ENCODE measurements at regions of chr17 and their contacts with region 1.

Region 1: DNA sequence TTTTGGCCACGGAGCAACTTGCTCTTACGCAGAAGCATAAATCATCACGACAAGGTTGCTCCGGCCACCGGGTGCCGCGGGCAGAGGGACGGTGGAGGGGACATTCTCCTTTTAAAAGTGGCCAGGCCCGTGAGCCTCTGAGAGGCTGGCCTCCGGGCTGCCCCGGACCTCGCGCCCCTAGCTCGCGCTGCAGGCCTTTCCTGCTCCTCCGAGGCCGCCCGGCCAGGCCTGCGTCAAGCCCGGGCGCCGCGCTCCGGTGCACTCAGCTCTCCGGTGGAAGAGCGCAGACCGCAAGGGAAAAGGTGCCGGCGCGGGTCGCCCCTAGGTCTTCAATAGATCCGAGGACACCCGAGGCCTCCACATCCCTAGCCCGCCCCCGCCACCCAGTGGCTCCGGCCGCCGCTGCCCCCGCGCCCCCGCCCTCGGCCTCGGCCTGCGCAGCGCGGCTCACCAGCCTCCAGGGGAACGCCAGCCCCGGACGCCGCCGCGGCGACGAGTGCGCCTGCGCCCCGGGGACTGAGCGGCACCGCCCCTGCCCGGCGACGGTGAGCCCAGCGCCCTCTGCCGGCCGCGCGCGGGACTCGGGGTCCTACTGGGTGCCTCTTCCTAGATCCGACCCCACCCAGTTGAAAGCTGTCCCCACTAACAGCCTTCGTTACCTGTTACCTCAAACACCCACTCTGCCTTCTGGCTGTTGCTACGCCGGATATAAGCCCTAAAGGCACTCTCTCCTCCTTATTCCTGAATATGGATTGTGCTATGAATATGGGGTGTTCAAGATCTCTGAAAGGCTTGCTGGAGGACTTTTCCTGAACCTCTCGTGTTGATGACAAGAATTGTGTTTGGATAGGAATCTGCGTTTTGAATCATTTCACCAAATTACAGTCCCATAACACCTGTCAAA is at the start of gene LYRM9:
- DNase-seq: peak; percentile 92 to 98 (median 93)
- ATAC-seq: peak; percentile 92 to 100 (median 100)
- H3K4me3 ChIP-seq: peak within 1 kb of the TSS; percentile 47 to 92 (median 76)
- H3K27ac ChIP-seq: peak within 1 kb of the TSS; percentile 14 to 93 (median 88)
- H3K4me1 ChIP-seq: peaks cover 0 to 27% (median 10%) of the 10 kb centered on the region in 12 donors
- H3K27me3 ChIP-seq: no peaks in the 10 kb centered on the region
- CTCF ChIP-seq: peak; percentile 80 to 99 (median 96)
- POLR2A ChIP-seq: peak in 1 of 2 donors; percentile 50
- total RNA-seq, gene LYRM9: 3.9 to 25.2 (median 9.7) TPM

Region 2: DNA sequence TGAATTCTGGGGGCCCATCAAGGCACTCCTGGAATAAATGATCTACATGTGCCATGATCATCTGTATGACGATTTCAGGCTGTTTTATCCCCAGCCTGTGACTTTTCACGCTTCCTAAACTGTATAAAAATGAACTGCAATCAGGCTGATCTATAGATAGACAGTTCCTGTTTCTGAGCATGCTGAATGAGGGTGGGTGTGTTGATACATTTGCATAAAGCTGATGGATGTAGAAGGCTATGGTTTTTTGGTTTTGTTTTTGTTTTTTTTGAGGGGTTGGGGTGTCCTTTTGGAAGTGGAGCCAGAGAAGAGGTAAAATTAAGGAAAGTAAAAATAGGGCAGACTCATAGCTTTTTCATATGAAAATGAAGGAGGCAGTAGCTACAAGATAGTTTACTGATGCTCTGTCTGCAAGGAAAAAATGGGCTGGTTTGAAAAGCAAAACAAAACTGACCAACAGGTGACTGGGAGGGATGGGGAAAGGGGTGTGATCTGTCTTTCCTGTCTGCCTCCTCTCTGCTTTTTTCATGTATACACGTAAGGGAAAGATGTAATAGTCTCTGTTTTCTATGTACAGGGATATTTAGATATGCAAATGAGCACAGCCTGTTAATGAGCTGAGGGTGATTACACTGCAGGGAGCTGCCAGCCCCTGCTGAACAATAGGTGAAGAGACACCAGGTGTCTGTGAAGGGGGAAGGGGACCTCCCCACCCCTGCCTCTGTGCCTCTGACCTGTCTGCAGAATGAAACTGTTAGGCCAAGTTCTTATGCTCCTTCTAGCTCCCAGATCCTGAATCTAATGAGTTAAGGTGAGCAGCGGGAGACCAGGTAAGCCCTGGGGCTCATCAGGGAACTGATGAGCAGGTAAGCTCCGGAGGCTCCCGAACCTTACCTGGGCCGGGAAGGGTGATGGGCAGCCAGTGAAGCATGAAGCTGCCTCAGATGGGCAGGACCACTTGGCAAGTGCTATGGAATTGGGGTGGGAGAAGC is 46.7 kb after region 1 on chr17:
- intact Hi-C with region 1: no loop called
- DNase-seq: no peak
- ATAC-seq: no peak
- H3K4me3 ChIP-seq: no peak overlapping the region
- H3K27ac ChIP-seq: no peak overlapping the region
- H3K4me1 ChIP-seq: no peaks in the 10 kb centered on the region
- H3K27me3 ChIP-seq: peaks cover 0 to 2% (median 0%) of the 10 kb centered on the region in 9 donors
- CTCF ChIP-seq: no peak
- POLR2A ChIP-seq: no peak

Region 3: DNA sequence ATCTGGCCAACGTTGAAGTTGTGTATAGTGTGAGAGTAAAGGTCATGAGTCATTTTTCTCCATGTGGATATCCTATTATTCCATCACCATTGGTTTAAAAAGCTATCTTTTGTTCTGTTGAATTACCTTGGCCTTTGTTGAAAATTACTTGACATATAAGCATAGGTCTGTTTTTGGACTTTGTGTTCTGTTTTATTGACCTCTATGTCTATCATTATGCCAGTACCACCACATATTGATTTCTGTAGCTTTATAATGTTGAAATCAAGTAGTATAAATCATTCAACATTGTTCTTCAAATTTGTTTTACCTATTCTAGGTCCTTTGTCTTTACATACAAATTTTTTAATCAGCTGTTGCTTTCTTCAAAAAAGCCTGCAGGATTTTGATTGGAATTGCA is 207.8 kb after region 1 on chr17:
- intact Hi-C with region 1: loop called in 1 of 10 experiments (anchors 5 kb)
- DNase-seq: no peak
- ATAC-seq: no peak
- H3K4me3 ChIP-seq: no peak overlapping the region
- H3K27ac ChIP-seq: no peak overlapping the region
- H3K4me1 ChIP-seq: peaks cover 0 to 19% (median 0%) of the 10 kb centered on the region in 12 donors
- H3K27me3 ChIP-seq: no peaks in the 10 kb centered on the region
- CTCF ChIP-seq: no peak
- POLR2A ChIP-seq: no peak

Region 4: DNA sequence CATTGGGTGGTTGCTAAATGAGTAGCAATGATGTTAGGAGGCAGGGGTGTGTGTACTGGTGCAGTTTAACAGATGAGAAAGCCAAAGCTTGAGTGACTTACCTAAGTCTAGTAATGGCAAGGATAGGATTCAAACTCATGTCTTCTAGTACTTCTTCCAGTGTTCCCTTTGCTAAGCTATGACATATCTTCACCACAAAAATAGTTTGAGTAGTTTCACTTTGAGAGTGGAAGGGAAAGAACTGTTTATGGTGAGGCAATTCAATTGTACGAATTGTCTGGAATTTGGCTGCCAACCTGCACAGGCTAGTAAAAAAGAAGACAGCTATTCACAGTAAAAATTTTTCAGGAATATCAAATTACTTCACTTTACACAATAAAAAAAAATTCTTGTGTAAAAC is 287.3 kb after region 1 on chr17:
- intact Hi-C with region 1: loop called in 1 of 10 experiments (anchors 10 kb)
- DNase-seq: no peak
- ATAC-seq: no peak
- H3K4me3 ChIP-seq: no peak overlapping the region
- H3K27ac ChIP-seq: no peak overlapping the region
- H3K4me1 ChIP-seq: peaks cover 0 to 6% (median 0%) of the 10 kb centered on the region in 12 donors
- H3K27me3 ChIP-seq: no peaks in the 10 kb centered on the region
- CTCF ChIP-seq: no peak
- POLR2A ChIP-seq: no peak

Measured in heart left ventricle (tissue), 16 donors.